ENCODE measurements at regions of chr2 and their contacts with region 1.

Region 1: GRCh38 chr2:181275643-181276070 is 181.5 kb upstream of the ITGA4 start:
- DNase-seq: peak in 1 of 5 donors; percentile 21
- H3K4me3 ChIP-seq: no peak overlapping the region
- H3K27ac ChIP-seq: no peak overlapping the region
- H3K4me1 ChIP-seq: no peaks in the 10 kb centered on the region
- H3K27me3 ChIP-seq: no peaks in the 10 kb centered on the region
- CTCF ChIP-seq: no peak
- EP300 ChIP-seq: no peak
- POLR2A ChIP-seq: no peak

Region 2: DNA sequence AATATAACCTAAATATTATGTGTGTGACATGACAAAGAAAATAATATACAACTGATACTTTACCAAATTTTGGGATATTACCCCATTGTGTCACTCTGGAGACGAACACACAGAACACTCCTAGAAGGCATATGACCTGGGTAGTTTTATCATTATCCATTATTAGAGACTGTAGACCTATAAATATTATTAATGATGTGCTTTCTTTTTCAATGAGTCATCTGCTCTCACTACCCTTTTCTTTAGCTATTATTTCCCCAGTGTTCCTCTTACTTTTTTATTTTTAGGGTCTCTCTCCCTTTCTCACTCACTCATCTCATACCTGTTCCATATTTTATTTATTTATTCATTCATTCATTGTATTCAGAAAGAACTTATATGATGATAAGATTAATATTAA is 38.2 kb after region 1 on chr2:
- intact Hi-C with region 1: loop called in 1 of 4 experiments (anchors 1 kb)
- DNase-seq: no peak
- H3K4me3 ChIP-seq: no peak overlapping the region
- H3K27ac ChIP-seq: no peak overlapping the region
- H3K4me1 ChIP-seq: no peaks in the 10 kb centered on the region
- H3K27me3 ChIP-seq: no peaks in the 10 kb centered on the region
- CTCF ChIP-seq: no peak
- EP300 ChIP-seq: no peak
- POLR2A ChIP-seq: no peak

Region 3: DNA sequence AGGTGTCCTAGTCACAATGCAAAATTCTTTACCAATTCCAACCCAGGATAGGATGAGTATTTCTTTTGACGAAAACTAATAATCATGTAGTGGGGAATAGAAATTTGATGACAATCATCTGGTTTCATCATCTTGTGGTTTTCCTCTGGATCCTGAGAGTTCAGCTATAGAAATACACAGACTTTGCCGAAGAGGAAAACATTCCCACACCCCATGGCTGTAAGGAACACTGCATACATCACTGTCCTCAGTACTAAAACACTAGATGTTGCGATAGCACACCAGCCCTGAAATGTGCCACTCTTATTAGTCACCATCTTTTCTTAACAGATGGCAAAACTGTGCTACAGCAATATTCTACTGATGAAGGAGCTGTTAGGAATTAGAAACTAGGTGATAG is 351.9 kb after region 1 on chr2:
- intact Hi-C with region 1: no loop called
- DNase-seq: no peak
- H3K4me3 ChIP-seq: no peak overlapping the region
- H3K27ac ChIP-seq: no peak overlapping the region
- H3K4me1 ChIP-seq: no peaks in the 10 kb centered on the region
- H3K27me3 ChIP-seq: no peaks in the 10 kb centered on the region
- CTCF ChIP-seq: no peak
- EP300 ChIP-seq: no peak
- POLR2A ChIP-seq: no peak

Region 4: DNA sequence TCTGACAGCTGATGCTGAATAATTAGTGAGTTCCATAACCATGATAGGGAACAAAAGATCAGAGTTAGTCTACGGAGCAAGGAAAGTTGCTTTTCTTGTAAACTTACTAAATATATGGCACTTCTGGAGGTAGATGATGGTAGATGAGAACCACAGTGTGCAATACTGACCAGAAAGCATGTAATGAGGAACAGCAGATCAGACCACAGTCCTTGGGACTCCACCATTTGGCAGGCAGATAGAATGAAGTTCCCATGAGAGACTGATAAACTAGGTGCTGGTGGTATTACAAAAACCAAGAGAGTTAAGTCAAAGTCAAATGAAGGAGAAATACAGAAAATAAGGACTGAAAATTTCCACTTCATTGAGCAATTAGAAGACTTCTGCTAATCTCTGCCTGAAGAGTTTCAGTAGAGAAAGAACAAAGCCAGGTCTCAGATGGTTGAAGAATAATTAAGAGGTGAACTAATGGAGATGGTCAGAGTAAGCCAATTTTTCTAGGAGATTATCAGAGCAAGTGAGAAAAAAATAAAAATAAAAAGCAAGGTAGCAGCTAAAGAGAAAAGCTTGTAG is 370.8 kb after region 1 on chr2:
- intact Hi-C with region 1: no loop called
- DNase-seq: no peak
- H3K4me3 ChIP-seq: no peak overlapping the region
- H3K27ac ChIP-seq: no peak overlapping the region
- H3K4me1 ChIP-seq: no peaks in the 10 kb centered on the region
- H3K27me3 ChIP-seq: no peaks in the 10 kb centered on the region
- CTCF ChIP-seq: no peak
- EP300 ChIP-seq: no peak
- POLR2A ChIP-seq: no peak

Measured in ovary (tissue), 10 donors.